WTC11 (cell line): ENCODE measurements at regions of chr12 and their contacts with region 1.

Region 1: DNA sequence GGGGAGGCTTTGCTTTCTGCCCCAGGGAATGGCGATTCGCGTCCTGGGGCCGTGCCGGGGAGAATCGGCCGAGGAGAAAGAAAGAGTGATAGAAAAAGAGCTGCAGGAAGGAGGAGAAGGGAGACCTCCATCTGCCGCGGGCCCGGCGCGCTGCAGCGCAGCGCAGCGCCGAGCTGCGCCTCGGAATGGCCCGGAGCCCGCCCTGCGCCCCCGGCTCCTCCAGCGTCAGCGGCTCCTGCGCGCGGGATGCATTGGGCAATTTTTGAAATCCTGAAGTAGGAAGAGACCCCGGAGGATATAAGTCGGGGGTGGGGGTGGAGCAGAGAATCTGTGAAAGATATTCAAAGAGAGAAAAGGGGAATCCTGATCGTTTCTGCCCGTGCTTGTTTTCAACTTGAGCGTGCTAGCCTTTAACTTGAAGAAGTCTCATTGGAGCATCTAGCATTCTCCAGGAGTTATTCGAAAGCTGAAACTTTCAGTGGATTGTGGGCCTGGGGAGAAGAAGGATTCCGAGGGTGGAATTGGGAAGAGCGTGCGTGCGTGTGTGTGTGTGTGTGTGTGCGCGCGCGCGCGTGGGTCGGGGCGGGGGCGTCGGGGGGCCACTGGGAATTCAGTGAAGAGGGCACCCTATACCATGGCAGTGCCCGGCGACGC is 441 bp downstream of the PDE3A start:
- DNase-seq: peak; percentile 47
- ATAC-seq: peak; percentile 50
- H3K4me3 Mint-ChIP-seq: peak overlapping the region; percentile 95
- H3K27ac Mint-ChIP-seq: peak overlapping the region; percentile 90; the same call in 1 of the 2 replicates
- H3K4me1 Mint-ChIP-seq: peaks cover 21% of the 10 kb centered on the region
- H3K27me3 Mint-ChIP-seq: peaks cover 19% of the 10 kb centered on the region
- CTCF ChIP-seq: no peak

Region 2: GRCh38 chr12:18512820-18513219 is 1856.0 kb before region 1 on chr12:
- CTCF ChIA-PET with region 1: no interaction called
- POLR2A ChIA-PET with region 1: interaction called, 10 read pairs
- DNase-seq: no peak
- ATAC-seq: no peak
- H3K4me3 Mint-ChIP-seq: no peak overlapping the region
- H3K27ac Mint-ChIP-seq: no peak overlapping the region
- H3K4me1 Mint-ChIP-seq: peaks cover 24% of the 10 kb centered on the region
- H3K27me3 Mint-ChIP-seq: no peaks in the 10 kb centered on the region
- CTCF ChIP-seq: no peak

Region 3: DNA sequence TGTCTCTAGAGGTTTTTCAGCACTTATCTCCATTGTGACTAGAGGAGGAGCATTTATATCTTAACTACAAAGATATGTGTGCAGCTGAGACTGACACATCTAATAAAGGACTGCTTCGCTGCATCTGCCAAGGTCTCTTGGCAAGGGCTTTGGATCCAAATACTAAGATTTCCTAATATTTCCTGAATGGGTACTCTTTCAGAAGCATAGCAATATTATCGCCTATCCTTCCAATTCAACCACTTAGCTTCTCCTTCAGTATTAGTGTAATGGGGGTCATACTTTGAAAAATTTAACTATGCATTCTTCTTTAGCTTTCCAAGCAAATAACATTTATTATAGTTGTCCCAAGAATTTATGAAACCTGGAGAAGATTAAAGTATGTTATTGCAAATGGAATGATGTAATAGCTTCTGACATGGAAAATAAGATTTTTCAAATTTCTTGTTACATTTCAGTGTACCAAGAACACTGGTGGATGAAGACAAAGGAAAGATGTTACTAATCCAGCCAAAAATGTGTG is 243.4 kb before region 1 on chr12:
- CTCF ChIA-PET with region 1: no interaction called
- POLR2A ChIA-PET with region 1: no interaction called
- DNase-seq: no peak
- ATAC-seq: no peak
- H3K4me3 Mint-ChIP-seq: no peak overlapping the region
- H3K27ac Mint-ChIP-seq: no peak overlapping the region
- H3K4me1 Mint-ChIP-seq: peaks cover 4% of the 10 kb centered on the region
- H3K27me3 Mint-ChIP-seq: no peaks in the 10 kb centered on the region
- CTCF ChIP-seq: no peak

Region 4: GRCh38 chr12:20320552-20320951 is 48.2 kb before region 1 on chr12:
- CTCF ChIA-PET with region 1: no interaction called
- POLR2A ChIA-PET with region 1: no interaction called
- DNase-seq: no peak
- ATAC-seq: no peak
- H3K4me3 Mint-ChIP-seq: no peak overlapping the region
- H3K27ac Mint-ChIP-seq: peak overlapping the region; percentile 90
- H3K4me1 Mint-ChIP-seq: peaks cover 18% of the 10 kb centered on the region
- H3K27me3 Mint-ChIP-seq: no peaks in the 10 kb centered on the region
- CTCF ChIP-seq: no peak

Region 5: DNA sequence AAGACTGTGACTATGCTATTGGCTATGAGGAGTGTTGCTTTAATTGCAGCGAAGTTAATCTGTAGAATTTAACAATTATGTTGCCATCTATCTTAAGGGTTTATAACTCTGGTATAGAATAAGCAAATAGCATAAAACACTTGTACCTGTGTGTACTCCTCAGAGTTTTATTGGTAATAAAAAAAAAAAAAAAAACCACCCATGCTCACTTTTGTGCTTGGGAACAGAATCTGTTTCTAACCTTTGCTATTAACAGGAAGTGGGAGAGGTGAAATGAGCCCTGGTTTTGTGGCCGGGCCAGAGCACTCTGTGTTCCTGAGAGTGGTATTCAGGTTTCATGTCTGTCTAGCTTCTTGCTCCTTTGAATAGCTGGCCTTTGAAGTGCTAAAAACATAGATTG is 52.6 kb after region 1 on chr12:
- CTCF ChIA-PET with region 1: no interaction called
- POLR2A ChIA-PET with region 1: no interaction called
- DNase-seq: no peak
- ATAC-seq: peak; percentile 46; the same call in 1 of the 2 replicates
- H3K4me3 Mint-ChIP-seq: no peak overlapping the region
- H3K27ac Mint-ChIP-seq: peak overlapping the region; percentile 44; the same call in 1 of the 2 replicates
- H3K4me1 Mint-ChIP-seq: peaks cover 25% of the 10 kb centered on the region
- H3K27me3 Mint-ChIP-seq: no peaks in the 10 kb centered on the region
- CTCF ChIP-seq: no peak

Region 6: GRCh38 chr12:20483776-20484175 is 115.0 kb after region 1 on chr12:
- CTCF ChIA-PET with region 1: no interaction called
- POLR2A ChIA-PET with region 1: no interaction called
- DNase-seq: no peak
- ATAC-seq: no peak
- H3K4me3 Mint-ChIP-seq: no peak overlapping the region
- H3K27ac Mint-ChIP-seq: no peak overlapping the region
- H3K4me1 Mint-ChIP-seq: peaks cover 8% of the 10 kb centered on the region; the same call in 1 of the 2 replicates
- H3K27me3 Mint-ChIP-seq: no peaks in the 10 kb centered on the region
- CTCF ChIP-seq: no peak